Naive thymus-derived CD4-positive, alpha-beta T cell (primary cell): ENCODE measurements at regions of chr11 and their contacts with region 1.

Region 1: GRCh38 chr11:46616998-46617675 is at the starts of genes ATG13 and HARBI1:
- DNase-seq: peak; percentile 89 to 95 (median 94)
- ATAC-seq: peak; percentile 96
- H3K4me3 ChIP-seq: peak within 1 kb of the TSS; percentile 99
- H3K4me3 Mint-ChIP-seq: peak within 1 kb of the TSS; percentile 93 to 99 (median 96)
- H3K27ac ChIP-seq: peak within 1 kb of the TSS; percentile 100
- H3K27ac Mint-ChIP-seq: peak within 1 kb of the TSS; percentile 95 to 100 (median 99)
- H3K4me1 ChIP-seq: peaks cover 17 to 27% of the 10 kb centered on the region in 2 donors
- H3K4me1 Mint-ChIP-seq: peaks cover 26 to 53% (median 42%) of the 10 kb centered on the region in 7 donors
- H3K27me3 ChIP-seq: no peaks in the 10 kb centered on the region
- H3K27me3 Mint-ChIP-seq: no peaks in the 10 kb centered on the region
- total RNA-seq, gene ATG13: 70.0 to 114 (median 96.8) TPM
- total RNA-seq, gene HARBI1: 5.8 to 18.1 (median 8.0) TPM

Region 2: GRCh38 chr11:45917623-45918330 is 699.4 kb before region 1 on chr11 and contains the start of gene PEX16:
- CTCF ChIA-PET with region 1: no interaction called
- POLR2A ChIA-PET with region 1: interaction called, 3 read pairs
- intact Hi-C with region 1: loop called (anchors 2 to 5 kb)
- DNase-seq: peak; percentile 86 to 98 (median 97)
- ATAC-seq: peak; percentile 95
- H3K4me3 ChIP-seq: peak within 1 kb of the TSS; percentile 72
- H3K4me3 Mint-ChIP-seq: peak within 1 kb of the TSS; percentile 86 to 98 (median 96)
- H3K27ac ChIP-seq: peak within 1 kb of the TSS; percentile 87
- H3K27ac Mint-ChIP-seq: peak within 1 kb of the TSS; percentile 91 to 100 (median 98)
- H3K4me1 ChIP-seq: peaks cover 24 to 36% of the 10 kb centered on the region in 2 donors
- H3K4me1 Mint-ChIP-seq: peaks cover 31 to 66% (median 49%) of the 10 kb centered on the region in 7 donors
- H3K27me3 ChIP-seq: no peaks in the 10 kb centered on the region
- H3K27me3 Mint-ChIP-seq: peaks cover 0 to 13% (median 4%) of the 10 kb centered on the region in 5 donors
- total RNA-seq, gene PEX16: 48.2 to 64.3 (median 58.1) TPM

Region 3: GRCh38 chr11:46346886-46347636 is 270.1 kb before region 1 on chr11 and contains the start of gene DGKZ:
- CTCF ChIA-PET with region 1: interaction called, 3 read pairs
- POLR2A ChIA-PET with region 1: interaction called, 3 read pairs
- intact Hi-C with region 1: loop called (anchors 1 to 5 kb)
- DNase-seq: peak; percentile 85 to 100 (median 96)
- ATAC-seq: peak; percentile 92
- H3K4me3 ChIP-seq: peak within 1 kb of the TSS; percentile 91
- H3K4me3 Mint-ChIP-seq: peak within 1 kb of the TSS; percentile 93 to 97 (median 95)
- H3K27ac ChIP-seq: peak within 1 kb of the TSS; percentile 83
- H3K27ac Mint-ChIP-seq: peak within 1 kb of the TSS; percentile 89 to 98 (median 94)
- H3K4me1 ChIP-seq: peaks cover 46 to 79% of the 10 kb centered on the region in 2 donors
- H3K4me1 Mint-ChIP-seq: peaks cover 61 to 85% (median 75%) of the 10 kb centered on the region in 7 donors
- H3K27me3 ChIP-seq: no peaks in the 10 kb centered on the region
- H3K27me3 Mint-ChIP-seq: peaks cover 0 to 3% (median 0%) of the 10 kb centered on the region in 5 donors
- total RNA-seq, gene DGKZ: 146 to 291 (median 263) TPM

Region 4: GRCh38 chr11:46554205-46555055 is 62.7 kb before region 1 on chr11:
- CTCF ChIA-PET with region 1: no interaction called
- POLR2A ChIA-PET with region 1: interaction called, 3 read pairs
- intact Hi-C with region 1: loop called in 1 of 2 experiments (anchors 1 kb)
- DNase-seq: no peak
- ATAC-seq: no peak
- H3K4me3 ChIP-seq: no peak overlapping the region
- H3K4me3 Mint-ChIP-seq: peak overlapping the region in 8 of 10 donors; percentile 12 to 72 (median 44)
- H3K27ac ChIP-seq: peak overlapping the region; percentile 36
- H3K27ac Mint-ChIP-seq: peak overlapping the region; percentile 7 to 87 (median 39)
- H3K4me1 ChIP-seq: peaks cover 26 to 32% of the 10 kb centered on the region in 2 donors
- H3K4me1 Mint-ChIP-seq: peaks cover 37 to 70% (median 60%) of the 10 kb centered on the region in 7 donors
- H3K27me3 ChIP-seq: no peaks in the 10 kb centered on the region
- H3K27me3 Mint-ChIP-seq: no peaks in the 10 kb centered on the region

Region 5: DNA sequence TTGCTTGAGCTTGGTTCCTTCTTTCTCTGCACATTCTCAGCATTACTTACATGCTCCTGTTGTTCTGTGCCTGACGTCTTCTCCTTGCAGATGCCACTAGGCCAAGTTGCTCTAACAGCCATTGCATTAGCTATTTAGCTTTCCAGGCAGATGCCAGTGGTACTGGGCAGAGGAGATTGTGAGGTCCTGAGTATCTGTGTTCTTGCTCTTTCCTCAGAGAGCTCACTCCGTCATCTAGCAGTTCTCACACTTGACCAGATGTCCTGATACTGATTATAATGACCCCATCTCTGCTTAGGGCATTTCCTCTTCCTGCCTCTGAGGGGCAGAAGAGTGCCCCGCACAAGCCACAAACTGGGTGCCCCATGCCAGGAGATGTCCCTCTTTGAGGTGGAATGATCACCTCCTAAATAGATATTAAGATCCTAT is 52.6 kb after region 1 on chr11:
- CTCF ChIA-PET with region 1: interaction called, 5 read pairs
- POLR2A ChIA-PET with region 1: interaction called, 5 read pairs
- intact Hi-C with region 1: loop called (anchors 1 kb)
- DNase-seq: no peak
- ATAC-seq: no peak
- H3K4me3 ChIP-seq: no peak overlapping the region
- H3K4me3 Mint-ChIP-seq: peak overlapping the region; percentile 24 to 82 (median 54)
- H3K27ac ChIP-seq: peak overlapping the region; percentile 34
- H3K27ac Mint-ChIP-seq: peak overlapping the region; percentile 38 to 95 (median 80)
- H3K4me1 ChIP-seq: peaks cover 48 to 59% of the 10 kb centered on the region in 2 donors
- H3K4me1 Mint-ChIP-seq: peaks cover 36 to 69% (median 50%) of the 10 kb centered on the region in 7 donors
- H3K27me3 ChIP-seq: no peaks in the 10 kb centered on the region
- H3K27me3 Mint-ChIP-seq: no peaks in the 10 kb centered on the region

Region 6: GRCh38 chr11:46800177-46800576 is 183.0 kb after region 1 on chr11:
- CTCF ChIA-PET with region 1: no interaction called
- POLR2A ChIA-PET with region 1: no interaction called
- intact Hi-C with region 1: no loop called
- DNase-seq: no peak
- ATAC-seq: no peak
- H3K4me3 ChIP-seq: no peak overlapping the region
- H3K4me3 Mint-ChIP-seq: no peak overlapping the region
- H3K27ac ChIP-seq: no peak overlapping the region
- H3K27ac Mint-ChIP-seq: no peak overlapping the region
- H3K4me1 ChIP-seq: no peaks in the 10 kb centered on the region
- H3K4me1 Mint-ChIP-seq: peaks cover 0 to 5% (median 0%) of the 10 kb centered on the region in 7 donors
- H3K27me3 ChIP-seq: no peaks in the 10 kb centered on the region
- H3K27me3 Mint-ChIP-seq: no peaks in the 10 kb centered on the region

Region 7: DNA sequence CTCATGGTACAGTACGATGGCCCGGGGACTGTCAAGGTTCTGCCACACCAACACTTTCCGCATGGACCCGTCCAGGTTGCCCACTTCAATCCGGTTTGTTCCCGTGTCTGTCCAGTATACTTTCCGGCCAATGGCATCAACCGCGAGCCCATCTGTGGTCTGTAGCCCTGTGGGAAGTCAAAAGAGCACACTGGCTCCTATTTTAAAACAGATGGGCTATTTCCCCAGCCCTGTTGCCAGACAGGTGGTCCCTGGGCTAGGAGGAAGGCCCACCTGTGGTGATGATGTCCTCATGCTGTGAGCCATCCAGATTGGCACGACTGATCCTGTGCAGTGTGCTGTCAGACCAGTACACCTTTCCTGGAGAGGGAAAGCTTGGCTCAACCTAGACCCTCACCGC is 259.3 kb after region 1 on chr11:
- CTCF ChIA-PET with region 1: no interaction called
- POLR2A ChIA-PET with region 1: no interaction called
- intact Hi-C with region 1: no loop called
- DNase-seq: no peak
- ATAC-seq: no peak
- H3K4me3 ChIP-seq: no peak overlapping the region
- H3K4me3 Mint-ChIP-seq: no peak overlapping the region
- H3K27ac ChIP-seq: no peak overlapping the region
- H3K27ac Mint-ChIP-seq: no peak overlapping the region
- H3K4me1 ChIP-seq: no peaks in the 10 kb centered on the region
- H3K4me1 Mint-ChIP-seq: peaks cover 0 to 1% (median 0%) of the 10 kb centered on the region in 7 donors
- H3K27me3 ChIP-seq: no peaks in the 10 kb centered on the region
- H3K27me3 Mint-ChIP-seq: peaks cover 0 to 9% (median 3%) of the 10 kb centered on the region in 5 donors

Region 8: GRCh38 chr11:47213985-47214564 is 596.9 kb after region 1 on chr11:
- CTCF ChIA-PET with region 1: no interaction called
- POLR2A ChIA-PET with region 1: no interaction called
- intact Hi-C with region 1: loop called in 1 of 2 experiments (anchors 10 kb)
- DNase-seq: peak; percentile 64 to 85 (median 76)
- ATAC-seq: peak; percentile 86
- H3K4me3 ChIP-seq: peak overlapping the region; percentile 89
- H3K4me3 Mint-ChIP-seq: peak overlapping the region; percentile 92 to 100 (median 96)
- H3K27ac ChIP-seq: peak overlapping the region; percentile 85
- H3K27ac Mint-ChIP-seq: peak overlapping the region; percentile 96 to 100 (median 99)
- H3K4me1 ChIP-seq: peaks cover 3 to 21% of the 10 kb centered on the region in 2 donors
- H3K4me1 Mint-ChIP-seq: peaks cover 26 to 39% (median 32%) of the 10 kb centered on the region in 7 donors
- H3K27me3 ChIP-seq: no peaks in the 10 kb centered on the region
- H3K27me3 Mint-ChIP-seq: no peaks in the 10 kb centered on the region